Mammary epithelial cell (primary cell): ENCODE measurements at regions of chr1 and their contacts with region 1.

Region 1: GRCh38 chr1:58739856-58740466 is 40.1 kb upstream of the MYSM1 start:
- DNase-seq: peak; percentile 41
- H3K4me3 ChIP-seq: no peak overlapping the region
- H3K27ac ChIP-seq: no peak overlapping the region
- H3K4me1 ChIP-seq: peaks cover 13% of the 10 kb centered on the region
- H3K27me3 ChIP-seq: no peaks in the 10 kb centered on the region
- CTCF ChIP-seq: peak; percentile 70 to 75

Region 2: DNA sequence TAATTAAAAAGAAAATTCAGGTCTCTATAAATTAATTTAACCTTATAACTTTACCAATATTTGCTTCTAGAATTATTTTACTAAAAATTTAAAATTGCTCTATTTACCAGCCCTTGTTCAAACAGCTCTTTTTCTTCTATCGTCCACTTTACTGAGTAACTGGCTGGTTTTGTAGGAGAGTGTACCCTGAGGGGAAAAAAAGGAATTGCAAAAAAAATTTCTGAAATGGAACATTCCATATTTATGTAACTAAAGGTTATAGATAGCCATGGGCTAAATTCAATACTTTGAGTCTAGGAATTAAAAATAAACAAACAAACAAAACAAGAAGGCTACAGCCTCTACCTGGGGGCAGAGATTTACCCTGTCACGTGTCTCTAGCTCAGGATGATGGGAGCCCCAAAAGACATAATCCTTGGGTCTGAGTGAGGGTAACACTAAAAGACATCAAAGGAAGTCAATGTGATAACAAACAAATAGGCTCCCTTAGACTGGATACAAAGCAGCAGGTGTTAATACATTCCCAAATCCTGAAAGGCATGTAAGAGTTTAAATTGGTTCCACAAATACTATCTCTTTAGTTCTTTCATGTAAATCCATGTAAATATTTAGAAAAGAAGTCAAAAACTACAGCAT is 50.9 kb before region 1 on chr1:
- CTCF ChIA-PET with region 1: no interaction called
- dilution Hi-C with region 1: no loop called
- in situ Hi-C with region 1: no loop called
- intact Hi-C with region 1: no loop called
- DNase-seq: no peak
- H3K4me3 ChIP-seq: no peak overlapping the region
- H3K27ac ChIP-seq: no peak overlapping the region
- H3K4me1 ChIP-seq: no peaks in the 10 kb centered on the region
- H3K27me3 ChIP-seq: no peaks in the 10 kb centered on the region
- CTCF ChIP-seq: no peak

Region 3: GRCh38 chr1:58755468-58755872 is 15.5 kb after region 1 on chr1:
- CTCF ChIA-PET with region 1: no interaction called
- dilution Hi-C with region 1: no loop called
- in situ Hi-C with region 1: no loop called
- intact Hi-C with region 1: loop called (anchors 2 kb)
- DNase-seq: peak; percentile 98
- H3K4me3 ChIP-seq: no peak overlapping the region
- H3K27ac ChIP-seq: peak overlapping the region; percentile 65
- H3K4me1 ChIP-seq: peaks cover 42% of the 10 kb centered on the region
- H3K27me3 ChIP-seq: no peaks in the 10 kb centered on the region
- CTCF ChIP-seq: no peak

Region 4: DNA sequence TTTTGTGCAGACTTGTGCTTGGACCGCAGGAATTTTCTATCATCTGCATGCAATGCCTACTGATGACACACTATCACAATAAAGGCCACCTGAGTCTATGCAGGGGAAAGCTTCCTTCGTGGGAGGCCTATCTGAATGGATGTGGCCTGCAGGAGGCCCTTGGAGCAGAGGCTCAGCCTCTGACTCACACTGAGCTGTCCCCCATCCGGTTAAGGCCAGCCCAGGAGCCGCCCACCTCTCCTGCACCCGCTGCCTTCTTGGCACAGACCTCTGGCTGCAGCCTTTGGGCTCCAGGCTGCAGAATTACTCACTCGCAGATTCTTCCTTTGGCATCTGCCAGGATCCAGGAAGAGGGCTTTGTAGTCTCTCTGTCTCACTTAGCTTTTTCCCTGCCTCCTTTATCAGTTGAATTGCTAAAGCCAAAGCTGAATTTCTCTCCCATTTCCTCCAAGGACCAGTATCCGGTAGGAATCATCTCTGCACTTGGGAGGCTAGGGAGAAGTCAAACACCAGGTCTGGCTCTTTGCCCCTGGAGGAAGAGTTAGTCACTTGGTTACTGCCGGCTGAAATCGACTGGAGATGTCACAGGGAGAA is 109.0 kb after region 1 on chr1:
- CTCF ChIA-PET with region 1: no interaction called
- dilution Hi-C with region 1: no loop called
- in situ Hi-C with region 1: no loop called
- intact Hi-C with region 1: loop called (anchors 5 kb)
- DNase-seq: peak; percentile 100
- H3K4me3 ChIP-seq: no peak overlapping the region
- H3K27ac ChIP-seq: peak overlapping the region; percentile 76
- H3K4me1 ChIP-seq: peaks cover 35% of the 10 kb centered on the region
- H3K27me3 ChIP-seq: no peaks in the 10 kb centered on the region
- CTCF ChIP-seq: peak in 1 of 2 donors; percentile 34

Region 5: GRCh38 chr1:58971629-58972140 is 231.7 kb after region 1 on chr1:
- CTCF ChIA-PET with region 1: no interaction called
- dilution Hi-C with region 1: no loop called
- in situ Hi-C with region 1: no loop called
- intact Hi-C with region 1: no loop called
- DNase-seq: peak; percentile 54
- H3K4me3 ChIP-seq: no peak overlapping the region
- H3K27ac ChIP-seq: no peak overlapping the region
- H3K4me1 ChIP-seq: peaks cover 11% of the 10 kb centered on the region
- H3K27me3 ChIP-seq: no peaks in the 10 kb centered on the region
- CTCF ChIP-seq: no peak

Region 6: GRCh38 chr1:59699227-59699847 is 959.4 kb after region 1 on chr1:
- CTCF ChIA-PET with region 1: no interaction called
- dilution Hi-C with region 1: no loop called
- in situ Hi-C with region 1: loop called in 1 of 2 experiments (anchors 10 kb)
- intact Hi-C with region 1: loop called (anchors 1 kb)
- DNase-seq: no peak
- H3K4me3 ChIP-seq: no peak overlapping the region
- H3K27ac ChIP-seq: no peak overlapping the region
- H3K4me1 ChIP-seq: no peaks in the 10 kb centered on the region
- H3K27me3 ChIP-seq: no peaks in the 10 kb centered on the region
- CTCF ChIP-seq: peak; percentile 92 to 94